Heart left ventricle (tissue), 16 donors: ENCODE measurements at regions of chr2 and their contacts with region 1.

Region 1: DNA sequence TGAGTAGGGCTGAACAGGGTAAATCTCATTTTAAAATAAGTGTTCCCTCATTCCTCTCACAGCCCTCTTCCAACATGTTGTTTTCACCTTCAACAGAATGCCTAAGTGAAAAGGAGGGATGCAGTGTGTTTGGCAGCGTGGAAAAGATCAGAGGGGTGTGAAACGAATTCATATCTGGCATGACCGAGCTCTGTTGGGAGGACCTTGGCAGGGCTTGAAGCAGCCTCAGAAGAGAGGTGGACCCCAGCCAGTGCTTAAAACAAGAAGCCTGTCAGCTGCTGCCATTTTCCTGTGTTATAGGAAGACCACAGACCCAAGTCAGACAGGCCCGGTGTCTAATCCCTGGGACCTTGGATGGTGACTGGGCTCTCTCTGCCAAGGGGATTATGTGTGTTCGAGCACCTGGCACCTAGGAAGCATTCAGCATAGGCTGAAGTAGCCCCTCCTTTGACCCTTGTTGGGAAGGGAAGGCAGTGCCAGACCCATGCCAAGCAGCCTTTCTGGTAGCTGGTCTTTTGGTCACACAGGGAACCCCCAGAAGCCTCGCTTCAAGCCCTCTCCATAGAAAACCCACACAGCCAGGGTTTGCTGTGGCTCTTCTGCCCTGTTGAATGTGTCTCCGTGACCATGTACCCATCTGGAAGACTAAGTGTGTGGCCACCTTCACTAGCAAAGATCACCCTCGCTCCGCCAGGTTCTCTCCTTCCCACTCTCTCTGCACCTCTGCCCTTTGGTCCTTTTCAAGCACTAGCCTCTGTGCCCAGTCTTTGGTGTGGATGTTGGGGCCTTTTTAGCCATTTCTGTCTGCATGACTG is 87.5 kb upstream of the ST3GAL5 start:
- DNase-seq: peak in 2 of 5 donors; percentile 43 to 73
- ATAC-seq: peak; percentile 34 to 78 (median 68)
- H3K4me3 ChIP-seq: no peak overlapping the region
- H3K27ac ChIP-seq: no peak overlapping the region
- H3K4me1 ChIP-seq: peaks cover 0 to 25% (median 13%) of the 10 kb centered on the region in 12 donors
- H3K27me3 ChIP-seq: peaks cover 0 to 36% (median 0%) of the 10 kb centered on the region in 9 donors
- CTCF ChIP-seq: no peak
- POLR2A ChIP-seq: no peak

Region 2: DNA sequence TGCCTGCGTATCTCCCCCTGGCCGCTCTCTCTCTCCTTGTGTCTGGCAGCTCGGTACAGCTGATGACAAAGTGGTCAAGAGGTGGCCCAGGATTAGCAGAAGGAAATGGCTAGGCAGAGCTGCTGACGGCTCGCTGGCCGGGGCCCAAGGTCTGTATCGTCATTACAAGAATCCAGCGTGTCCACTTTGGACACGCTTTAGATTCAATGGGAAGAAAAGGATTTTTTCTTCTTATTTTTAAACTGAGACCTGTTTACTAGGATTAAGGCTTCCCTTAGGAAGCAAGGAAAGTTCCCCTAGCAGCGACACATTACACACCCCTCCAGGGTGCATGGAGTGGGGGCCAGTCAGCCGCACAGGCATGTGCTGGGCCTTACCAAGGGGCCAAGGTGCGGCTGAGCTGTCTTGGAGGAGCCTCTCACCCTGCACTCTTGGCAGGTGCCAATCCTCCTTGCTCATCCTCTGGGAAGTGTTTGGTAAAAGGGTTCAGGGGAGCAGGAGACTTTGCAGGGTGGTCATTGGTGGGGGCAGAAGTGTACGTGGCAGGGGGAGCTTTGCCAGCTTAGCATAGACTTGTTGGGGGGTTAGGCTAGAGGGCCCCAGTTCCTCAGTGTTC is 52.6 kb after region 1 on chr2:
- intact Hi-C with region 1: loop called in 2 of 10 experiments (anchors 2 to 10 kb)
- DNase-seq: peak; percentile 91 to 96 (median 93)
- ATAC-seq: peak; percentile 92 to 98 (median 96)
- H3K4me3 ChIP-seq: peak overlapping the region in 1 of 12 donors; percentile 19
- H3K27ac ChIP-seq: peak overlapping the region in 11 of 12 donors; percentile 64 to 80 (median 69)
- H3K4me1 ChIP-seq: peaks cover 2 to 38% (median 20%) of the 10 kb centered on the region in 12 donors
- H3K27me3 ChIP-seq: no peaks in the 10 kb centered on the region
- CTCF ChIP-seq: no peak
- POLR2A ChIP-seq: no peak